CD14-positive monocyte (primary cell): ENCODE measurements at regions of chr5 and their contacts with region 1.

Region 1: GRCh38 chr5:54517174-54518092 is at the start of gene SNX18:
- DNase-seq: peak; percentile 87 to 91 (median 90)
- H3K4me3 ChIP-seq: peak within 1 kb of the TSS; percentile 82 to 91 (median 82)
- H3K4me3 Mint-ChIP-seq: peak within 1 kb of the TSS; percentile 96 to 97
- H3K27ac ChIP-seq: peak within 1 kb of the TSS; percentile 65 to 92
- H3K27ac Mint-ChIP-seq: peak within 1 kb of the TSS; percentile 71 to 94 (median 88)
- H3K4me1 ChIP-seq: peaks cover 31 to 38% of the 10 kb centered on the region in 2 donors
- H3K4me1 Mint-ChIP-seq: peaks cover 24% of the 10 kb centered on the region
- H3K27me3 ChIP-seq: peaks cover 0 to 8% of the 10 kb centered on the region in 2 donors
- H3K27me3 Mint-ChIP-seq: peaks cover 6 to 15% (median 9%) of the 10 kb centered on the region in 3 donors
- CTCF ChIP-seq: peak; percentile 97
- polyA plus RNA-seq, gene SNX18: 6.8 to 33.3 (median 12.4) TPM

Region 2: DNA sequence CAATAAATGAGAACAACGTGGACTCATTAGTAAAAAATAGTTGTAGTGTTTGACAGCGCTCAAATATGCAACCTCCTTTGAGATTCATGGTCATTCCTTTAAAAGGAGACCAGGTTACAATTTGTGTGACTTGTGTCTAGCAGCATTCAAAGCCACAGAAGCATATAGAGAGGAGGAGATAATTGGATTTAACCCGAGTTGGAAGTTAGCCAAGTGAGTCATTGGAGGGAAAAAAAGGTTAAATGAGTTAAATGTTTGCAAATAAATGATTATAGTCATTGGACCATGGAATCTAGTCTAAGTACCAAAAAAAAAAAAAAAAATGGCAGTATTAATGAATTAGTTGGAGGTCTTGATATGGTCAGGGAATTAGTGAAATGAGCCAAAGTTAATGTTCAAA is 1638.8 kb before region 1 on chr5:
- intact Hi-C with region 1: no loop called
- DNase-seq: no peak
- H3K4me3 ChIP-seq: no peak overlapping the region
- H3K4me3 Mint-ChIP-seq: no peak overlapping the region
- H3K27ac ChIP-seq: no peak overlapping the region
- H3K27ac Mint-ChIP-seq: peak overlapping the region in 1 of 7 donors; percentile 65
- H3K4me1 ChIP-seq: no peaks in the 10 kb centered on the region
- H3K4me1 Mint-ChIP-seq: no peaks in the 10 kb centered on the region
- H3K27me3 ChIP-seq: no peaks in the 10 kb centered on the region
- H3K27me3 Mint-ChIP-seq: peaks cover 0 to 8% (median 2%) of the 10 kb centered on the region in 3 donors
- CTCF ChIP-seq: no peak

Region 3: GRCh38 chr5:54415896-54416601 is 101.4 kb before region 1 on chr5:
- intact Hi-C with region 1: no loop called
- DNase-seq: no peak
- H3K4me3 ChIP-seq: no peak overlapping the region
- H3K4me3 Mint-ChIP-seq: no peak overlapping the region
- H3K27ac ChIP-seq: no peak overlapping the region
- H3K27ac Mint-ChIP-seq: no peak overlapping the region
- H3K4me1 ChIP-seq: no peaks in the 10 kb centered on the region
- H3K4me1 Mint-ChIP-seq: no peaks in the 10 kb centered on the region
- H3K27me3 ChIP-seq: no peaks in the 10 kb centered on the region
- H3K27me3 Mint-ChIP-seq: peaks cover 1 to 12% (median 6%) of the 10 kb centered on the region in 3 donors
- CTCF ChIP-seq: no peak

Region 4: DNA sequence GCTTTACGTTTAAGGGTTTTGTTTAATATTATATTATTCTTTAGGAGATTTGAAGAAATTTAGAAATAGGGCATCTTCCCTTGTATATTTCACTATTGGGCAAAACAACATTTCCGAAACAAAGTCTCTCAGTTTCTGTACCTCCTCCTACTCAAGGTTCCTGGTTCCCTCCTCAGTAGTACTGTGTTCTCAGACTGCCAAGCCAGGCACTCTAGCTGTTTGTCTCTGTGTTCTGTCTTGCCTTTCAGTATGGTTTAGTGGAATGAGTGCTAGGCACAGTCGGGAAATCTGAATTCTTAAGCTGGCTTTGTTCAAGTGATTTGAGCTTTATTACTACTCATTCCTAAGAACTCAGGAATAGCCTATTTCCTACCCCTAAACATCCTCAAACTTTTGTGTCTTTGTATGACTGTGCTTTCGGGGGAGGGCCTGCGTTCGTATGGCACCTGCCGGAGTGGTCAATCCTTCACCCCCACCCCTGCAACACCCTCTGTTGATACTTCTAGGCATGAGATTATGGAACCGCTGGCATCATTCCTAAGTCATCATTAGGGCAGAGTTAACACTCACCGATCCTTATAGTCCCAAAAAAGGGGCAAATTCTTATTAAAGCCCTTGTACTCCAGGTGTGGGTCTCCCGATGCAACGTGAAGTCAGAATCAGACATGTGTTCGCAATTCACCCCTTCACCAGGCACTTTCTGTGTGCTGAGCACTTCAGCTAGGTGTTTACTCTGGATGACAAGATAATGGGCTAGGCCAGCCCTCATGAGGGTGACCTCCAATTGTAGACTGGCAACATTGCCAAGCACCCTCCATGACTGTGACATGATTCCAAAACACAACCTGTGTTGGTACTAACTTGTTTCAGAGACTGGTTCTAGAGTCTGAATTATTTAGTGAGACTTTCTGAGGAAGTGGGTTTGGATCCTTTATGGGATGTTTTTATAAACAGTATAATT is 24.7 kb after region 1 on chr5:
- intact Hi-C with region 1: no loop called
- DNase-seq: no peak
- H3K4me3 ChIP-seq: no peak overlapping the region
- H3K4me3 Mint-ChIP-seq: no peak overlapping the region
- H3K27ac ChIP-seq: peak overlapping the region in 1 of 2 donors; percentile 59
- H3K27ac Mint-ChIP-seq: peak overlapping the region in 5 of 7 donors; percentile 16 to 90 (median 54)
- H3K4me1 ChIP-seq: peaks cover 4 to 23% of the 10 kb centered on the region in 2 donors
- H3K4me1 Mint-ChIP-seq: peaks cover 49% of the 10 kb centered on the region
- H3K27me3 ChIP-seq: no peaks in the 10 kb centered on the region
- H3K27me3 Mint-ChIP-seq: peaks cover 0 to 2% (median 0%) of the 10 kb centered on the region in 3 donors
- CTCF ChIP-seq: no peak

Region 5: GRCh38 chr5:54558362-54558761 is 40.9 kb after region 1 on chr5:
- intact Hi-C with region 1: no loop called
- DNase-seq: no peak
- H3K4me3 ChIP-seq: no peak overlapping the region
- H3K4me3 Mint-ChIP-seq: no peak overlapping the region
- H3K27ac ChIP-seq: no peak overlapping the region
- H3K27ac Mint-ChIP-seq: no peak overlapping the region
- H3K4me1 ChIP-seq: peaks cover 0 to 3% of the 10 kb centered on the region in 2 donors
- H3K4me1 Mint-ChIP-seq: peaks cover 14% of the 10 kb centered on the region
- H3K27me3 ChIP-seq: no peaks in the 10 kb centered on the region
- H3K27me3 Mint-ChIP-seq: no peaks in the 10 kb centered on the region
- CTCF ChIP-seq: no peak

Region 6: GRCh38 chr5:54610197-54610944 is 92.9 kb after region 1 on chr5:
- intact Hi-C with region 1: loop called (anchors 5 to 10 kb)
- DNase-seq: peak; percentile 76 to 84 (median 82)
- H3K4me3 ChIP-seq: peak overlapping the region in 1 of 3 experiments; percentile 42
- H3K4me3 Mint-ChIP-seq: peak overlapping the region; percentile 6 to 76
- H3K27ac ChIP-seq: peak overlapping the region; percentile 59 to 83
- H3K27ac Mint-ChIP-seq: peak overlapping the region; percentile 91 to 97 (median 94)
- H3K4me1 ChIP-seq: peaks cover 69 to 74% of the 10 kb centered on the region in 2 donors
- H3K4me1 Mint-ChIP-seq: peaks cover 72% of the 10 kb centered on the region
- H3K27me3 ChIP-seq: no peaks in the 10 kb centered on the region
- H3K27me3 Mint-ChIP-seq: no peaks in the 10 kb centered on the region
- CTCF ChIP-seq: no peak

Region 7: GRCh38 chr5:54646356-54647101 is 129.1 kb after region 1 on chr5:
- intact Hi-C with region 1: loop called in 1 of 2 experiments (anchors 10 kb)
- DNase-seq: peak; percentile 85 to 96 (median 86)
- H3K4me3 ChIP-seq: peak overlapping the region in 2 of 3 experiments; percentile 25 to 64
- H3K4me3 Mint-ChIP-seq: peak overlapping the region; percentile 71 to 87
- H3K27ac ChIP-seq: peak overlapping the region; percentile 87 to 97
- H3K27ac Mint-ChIP-seq: peak overlapping the region; percentile 96 to 99 (median 97)
- H3K4me1 ChIP-seq: peaks cover 44 to 46% of the 10 kb centered on the region in 2 donors
- H3K4me1 Mint-ChIP-seq: peaks cover 52% of the 10 kb centered on the region
- H3K27me3 ChIP-seq: no peaks in the 10 kb centered on the region
- H3K27me3 Mint-ChIP-seq: peaks cover 0 to 2% (median 0%) of the 10 kb centered on the region in 3 donors
- CTCF ChIP-seq: no peak

Region 8: DNA sequence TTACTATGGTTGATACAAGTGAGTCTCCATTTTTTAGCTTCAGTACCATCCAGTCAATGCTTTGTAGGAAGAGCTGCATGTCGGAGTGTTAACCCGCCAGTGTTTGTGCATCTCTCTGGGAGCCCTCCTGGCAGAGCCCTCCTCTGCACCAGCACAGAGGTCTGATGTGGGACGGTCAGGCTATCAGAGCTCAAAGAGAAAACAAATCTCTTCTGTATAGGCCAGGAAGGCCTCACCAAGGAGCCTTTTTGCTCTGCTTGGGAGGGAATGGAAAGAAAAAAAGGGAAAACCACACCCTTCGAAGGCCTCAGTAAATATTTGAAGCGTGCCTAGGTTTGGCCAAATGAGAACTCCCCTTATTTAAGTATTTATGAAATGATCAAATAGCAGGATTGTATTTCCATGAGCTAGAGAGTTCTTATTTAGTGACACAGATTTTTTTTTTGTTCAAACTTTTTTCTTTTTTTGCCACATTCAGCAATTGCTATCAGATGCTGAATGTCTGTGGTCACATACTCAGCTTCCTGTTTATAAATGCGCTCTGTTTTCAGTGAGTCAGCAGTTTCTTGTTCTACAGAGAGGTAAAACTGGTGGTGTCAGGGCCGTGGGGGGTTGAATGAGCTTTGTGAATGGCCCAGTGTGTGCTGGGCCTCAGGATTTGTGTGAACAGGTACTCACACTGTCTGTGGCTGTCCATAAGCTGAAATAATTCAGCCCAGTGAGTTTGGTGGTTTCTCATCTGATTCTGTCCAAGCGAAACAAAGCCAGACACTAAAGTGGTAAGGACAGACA is 226.8 kb after region 1 on chr5:
- intact Hi-C with region 1: loop called in 1 of 2 experiments (anchors 10 kb)
- DNase-seq: peak; percentile 74 to 89 (median 82)
- H3K4me3 ChIP-seq: peak overlapping the region in 2 of 3 experiments; percentile 23 to 54
- H3K4me3 Mint-ChIP-seq: peak overlapping the region; percentile 65 to 82
- H3K27ac ChIP-seq: peak overlapping the region; percentile 51 to 78
- H3K27ac Mint-ChIP-seq: peak overlapping the region; percentile 91 to 98 (median 94)
- H3K4me1 ChIP-seq: peaks cover 28 to 47% of the 10 kb centered on the region in 2 donors
- H3K4me1 Mint-ChIP-seq: peaks cover 40% of the 10 kb centered on the region
- H3K27me3 ChIP-seq: no peaks in the 10 kb centered on the region
- H3K27me3 Mint-ChIP-seq: peaks cover 0 to 3% (median 2%) of the 10 kb centered on the region in 3 donors
- CTCF ChIP-seq: no peak

Region 9: DNA sequence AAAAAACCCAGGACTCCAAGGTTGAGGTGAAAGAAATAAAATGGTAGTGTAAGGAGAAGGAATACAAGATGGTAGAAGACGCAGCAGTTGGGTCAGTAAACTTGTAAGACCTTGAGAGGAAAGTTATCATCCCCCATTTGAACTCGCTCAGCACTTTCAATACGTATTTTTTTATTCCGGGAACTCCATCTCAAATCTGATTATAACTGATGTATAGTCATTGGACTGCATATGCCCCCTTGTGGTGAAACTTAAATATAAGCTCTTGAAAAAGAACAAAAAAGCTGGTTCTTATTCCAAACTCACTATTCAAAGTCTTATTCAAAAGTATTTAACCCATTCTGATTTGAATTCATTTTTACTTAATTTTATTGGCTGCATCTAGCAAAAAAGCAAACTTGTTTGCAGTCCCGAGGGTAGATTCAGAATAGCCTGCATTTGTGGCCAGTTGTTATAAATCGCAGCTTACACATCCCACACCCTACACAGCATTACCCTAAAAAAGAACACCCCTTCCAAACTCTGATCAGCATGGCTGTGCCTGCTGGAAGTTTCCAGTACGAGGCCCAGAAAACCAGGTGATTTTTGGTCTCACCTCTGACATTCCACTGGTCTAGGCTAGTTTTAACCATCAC is 350.0 kb after region 1 on chr5:
- intact Hi-C with region 1: loop called (anchors 5 kb)
- DNase-seq: peak; percentile 35 to 68 (median 59)
- H3K4me3 ChIP-seq: peak overlapping the region in 1 of 3 experiments; percentile 49
- H3K4me3 Mint-ChIP-seq: peak overlapping the region; percentile 28 to 68
- H3K27ac ChIP-seq: no peak overlapping the region
- H3K27ac Mint-ChIP-seq: peak overlapping the region in 1 of 7 donors; percentile 64
- H3K4me1 ChIP-seq: peaks cover 3 to 4% of the 10 kb centered on the region in 2 donors
- H3K4me1 Mint-ChIP-seq: peaks cover 4% of the 10 kb centered on the region
- H3K27me3 ChIP-seq: peaks cover 0 to 3% of the 10 kb centered on the region in 2 donors
- H3K27me3 Mint-ChIP-seq: peaks cover 2 to 6% (median 4%) of the 10 kb centered on the region in 3 donors
- CTCF ChIP-seq: peak; percentile 79